Endothelial cell of umbilical vein (primary cell): ENCODE measurements at regions of chr14 and their contacts with region 1.

Region 1: GRCh38 chr14:99415496-99416281 is 65.0 kb downstream of the SETD3 start:
- DNase-seq: peak; percentile 84
- H3K4me3 ChIP-seq: no peak overlapping the region
- H3K27ac ChIP-seq: no peak overlapping the region
- H3K4me1 ChIP-seq: no peaks in the 10 kb centered on the region
- H3K27me3 ChIP-seq: no peaks in the 10 kb centered on the region
- CTCF ChIP-seq: peak; percentile 66 to 67
- POLR2A ChIP-seq: no peak

Region 2: DNA sequence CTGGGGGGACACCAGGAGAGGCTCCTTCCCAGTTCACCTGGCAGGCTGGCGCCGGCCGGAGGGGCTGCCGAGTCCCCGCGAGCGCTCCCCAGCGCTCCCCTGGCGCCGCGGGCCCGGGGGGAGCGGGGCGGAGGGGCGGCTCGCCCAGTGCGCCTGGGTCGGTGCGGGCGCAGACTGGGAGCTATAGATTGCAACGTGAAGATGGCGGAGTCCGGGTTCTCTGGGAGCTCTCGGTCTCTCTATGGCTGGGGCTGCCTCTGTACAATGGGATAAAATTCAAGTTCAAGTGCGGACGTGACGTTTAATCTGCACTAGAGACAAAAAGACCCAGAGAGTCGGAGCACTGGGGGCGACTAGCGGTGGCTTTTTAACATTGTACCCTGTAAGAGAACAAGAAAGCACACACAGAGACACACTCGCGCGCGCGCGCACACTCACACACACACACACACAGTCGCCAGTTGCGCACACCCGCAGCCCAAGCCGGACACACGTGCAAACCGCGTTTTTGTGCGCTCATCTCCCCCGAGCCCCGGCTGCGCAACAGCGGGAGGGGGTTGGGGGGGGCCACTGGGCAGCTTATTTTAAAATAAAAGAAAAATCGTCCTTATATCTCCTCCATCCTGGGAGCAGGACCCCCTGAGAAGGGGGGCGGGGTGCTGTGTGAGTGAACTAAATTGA is 143.6 kb before region 1 on chr14 and contains the start of gene BCL11B:
- CTCF ChIA-PET with region 1: interaction called, 5 read pairs
- POLR2A ChIA-PET with region 1: no interaction called
- dilution Hi-C with region 1: no loop called
- intact Hi-C with region 1: loop called (anchors 5 kb)
- DNase-seq: peak; percentile 84
- H3K4me3 ChIP-seq: peak within 1 kb of the TSS; percentile 49 to 66 (median 53)
- H3K27ac ChIP-seq: no peak within 1 kb of the TSS
- H3K4me1 ChIP-seq: peaks cover 21% of the 10 kb centered on the region
- H3K27me3 ChIP-seq: peaks cover 48 to 88% of the 10 kb centered on the region in 2 experiments
- CTCF ChIP-seq: peak; percentile 41 to 62
- POLR2A ChIP-seq: no peak
- total RNA-seq, gene BCL11B: 0.07 TPM in 2 replicates

Region 3: GRCh38 chr14:99320105-99320572 is 95.5 kb before region 1 on chr14:
- CTCF ChIA-PET with region 1: interaction called, 80 read pairs
- POLR2A ChIA-PET with region 1: no interaction called
- dilution Hi-C with region 1: no loop called
- intact Hi-C with region 1: loop called (anchors 1 kb)
- DNase-seq: peak; percentile 32
- H3K4me3 ChIP-seq: no peak overlapping the region
- H3K27ac ChIP-seq: no peak overlapping the region
- H3K4me1 ChIP-seq: no peaks in the 10 kb centered on the region
- H3K27me3 ChIP-seq: no peaks in the 10 kb centered on the region
- CTCF ChIP-seq: peak; percentile 82 to 93
- POLR2A ChIP-seq: no peak

Region 4: DNA sequence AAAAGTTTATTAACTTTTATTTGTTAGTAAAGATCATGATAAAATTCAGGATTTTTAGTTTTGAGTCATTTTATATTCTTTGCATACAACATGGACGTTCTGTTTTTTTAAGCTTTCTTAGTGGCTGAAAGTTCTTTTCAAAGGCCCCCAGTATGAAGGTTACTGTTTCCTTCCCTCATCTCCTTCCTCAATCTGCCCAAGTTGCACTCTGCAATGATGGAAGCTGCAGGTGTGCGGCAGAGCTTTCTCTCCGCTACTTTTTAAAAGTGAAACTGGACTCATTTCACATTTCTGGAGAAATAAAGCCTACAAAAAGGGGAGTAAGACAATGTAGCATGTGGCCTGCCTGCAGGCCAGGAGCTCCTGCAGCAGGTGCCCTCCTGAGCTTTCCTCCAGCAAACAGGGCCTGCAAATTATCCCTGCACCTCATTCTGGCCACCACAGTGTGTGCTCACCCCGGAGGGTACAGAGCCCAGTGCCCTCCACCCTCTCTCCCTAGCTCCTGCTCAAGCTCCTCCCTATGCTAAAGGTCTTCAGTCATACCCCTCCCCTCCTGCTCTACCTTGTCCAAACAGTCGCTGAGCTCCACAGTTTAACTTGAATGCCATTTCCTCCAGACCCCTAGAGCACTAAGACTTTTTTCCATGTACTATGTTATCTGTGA is 13.9 kb before region 1 on chr14:
- CTCF ChIA-PET with region 1: interaction called, 16 read pairs
- POLR2A ChIA-PET with region 1: no interaction called
- dilution Hi-C with region 1: no loop called
- intact Hi-C with region 1: no loop called
- DNase-seq: no peak
- H3K4me3 ChIP-seq: no peak overlapping the region
- H3K27ac ChIP-seq: no peak overlapping the region
- H3K4me1 ChIP-seq: no peaks in the 10 kb centered on the region
- H3K27me3 ChIP-seq: no peaks in the 10 kb centered on the region
- CTCF ChIP-seq: no peak
- POLR2A ChIP-seq: no peak

Region 5: DNA sequence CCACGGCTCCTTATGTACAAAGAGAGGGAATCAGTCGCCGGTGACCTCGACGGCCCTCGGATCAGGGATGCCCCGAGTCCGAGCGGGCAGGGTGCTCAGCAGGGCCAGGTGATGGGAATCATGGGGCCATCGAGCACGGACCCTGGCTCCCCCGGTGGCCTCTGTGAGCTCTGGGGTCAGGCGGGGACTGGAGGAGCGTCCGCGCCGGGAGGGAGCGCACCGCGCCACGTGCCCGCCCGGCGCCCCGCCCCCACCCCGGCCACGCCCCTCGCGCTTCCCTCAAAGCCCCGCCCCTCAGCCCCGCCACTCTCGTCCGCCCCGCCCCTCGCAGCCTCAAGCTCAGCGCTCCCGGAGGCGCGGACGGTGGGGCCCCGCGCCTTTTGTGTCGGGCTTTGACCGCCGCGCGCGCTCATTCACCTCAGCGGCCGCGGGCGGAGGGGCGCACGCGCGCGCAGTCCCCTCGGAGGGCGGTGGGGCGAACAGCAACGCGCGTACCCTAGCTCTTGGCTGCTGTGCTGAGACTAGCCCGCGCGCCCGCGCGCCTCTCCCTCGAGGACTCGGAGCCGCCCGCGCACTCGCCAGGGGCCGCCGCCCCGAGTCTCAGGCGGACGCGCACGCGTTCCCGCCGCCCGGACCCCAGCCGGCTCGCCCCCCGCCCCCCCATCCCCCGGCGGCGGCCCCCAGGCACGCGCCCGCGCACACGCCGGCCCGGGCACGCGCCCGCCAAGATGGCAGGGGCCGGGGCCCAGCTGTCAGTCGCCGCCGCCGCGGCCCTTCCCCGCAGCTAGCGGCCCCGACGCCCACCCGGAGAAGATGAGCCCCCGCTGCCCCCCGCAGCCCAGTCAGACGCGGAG is 555.6 kb after region 1 on chr14:
- CTCF ChIA-PET with region 1: no interaction called
- POLR2A ChIA-PET with region 1: no interaction called
- dilution Hi-C with region 1: no loop called
- intact Hi-C with region 1: no loop called
- DNase-seq: peak; percentile 85
- H3K4me3 ChIP-seq: peak overlapping the region; percentile 47 to 80 (median 49)
- H3K27ac ChIP-seq: no peak overlapping the region
- H3K4me1 ChIP-seq: peaks cover 7% of the 10 kb centered on the region
- H3K27me3 ChIP-seq: peaks cover 10 to 12% of the 10 kb centered on the region in 2 experiments
- CTCF ChIP-seq: no peak
- POLR2A ChIP-seq: peak; percentile 33